Activated CD4-positive, alpha-beta memory T cell treated with anti-CD3 and anti-CD28 coated beads for 36 hours (primary cell): ENCODE measurements at regions of chr9 and their contacts with region 1.

Region 1: GRCh38 chr9:87375397-87376073 is 122.1 kb upstream of the DAPK1 start:
- DNase-seq: no peak
- H3K4me3 Mint-ChIP-seq: no peak overlapping the region
- H3K27ac Mint-ChIP-seq: no peak overlapping the region
- H3K4me1 Mint-ChIP-seq: peaks cover 10% of the 10 kb centered on the region
- H3K27me3 Mint-ChIP-seq: peaks cover 27% of the 10 kb centered on the region

Region 2: GRCh38 chr9:87464110-87464965 is 88.8 kb after region 1 on chr9:
- CTCF ChIA-PET with region 1: interaction called, 6 read pairs
- POLR2A ChIA-PET with region 1: interaction called, 4 read pairs
- intact Hi-C with region 1: loop called (anchors 1 kb)
- DNase-seq: peak; percentile 64
- H3K4me3 Mint-ChIP-seq: no peak overlapping the region
- H3K27ac Mint-ChIP-seq: peak overlapping the region; percentile 75
- H3K4me1 Mint-ChIP-seq: peaks cover 16% of the 10 kb centered on the region
- H3K27me3 Mint-ChIP-seq: no peaks in the 10 kb centered on the region